Activated naive CD4-positive, alpha-beta T cell treated with anti-CD3 and anti-CD28 coated beads for 36 hours (primary cell): ENCODE measurements at regions of chr15 and their contacts with region 1.

Region 1: GRCh38 chr15:70240082-70240481 is 142.4 kb upstream of the TLE3 start:
- DNase-seq: peak; percentile 84
- H3K4me3 Mint-ChIP-seq: no peak overlapping the region
- H3K27ac Mint-ChIP-seq: no peak overlapping the region
- H3K4me1 Mint-ChIP-seq: peaks cover 56% of the 10 kb centered on the region
- H3K27me3 Mint-ChIP-seq: peaks cover 2% of the 10 kb centered on the region

Region 2: DNA sequence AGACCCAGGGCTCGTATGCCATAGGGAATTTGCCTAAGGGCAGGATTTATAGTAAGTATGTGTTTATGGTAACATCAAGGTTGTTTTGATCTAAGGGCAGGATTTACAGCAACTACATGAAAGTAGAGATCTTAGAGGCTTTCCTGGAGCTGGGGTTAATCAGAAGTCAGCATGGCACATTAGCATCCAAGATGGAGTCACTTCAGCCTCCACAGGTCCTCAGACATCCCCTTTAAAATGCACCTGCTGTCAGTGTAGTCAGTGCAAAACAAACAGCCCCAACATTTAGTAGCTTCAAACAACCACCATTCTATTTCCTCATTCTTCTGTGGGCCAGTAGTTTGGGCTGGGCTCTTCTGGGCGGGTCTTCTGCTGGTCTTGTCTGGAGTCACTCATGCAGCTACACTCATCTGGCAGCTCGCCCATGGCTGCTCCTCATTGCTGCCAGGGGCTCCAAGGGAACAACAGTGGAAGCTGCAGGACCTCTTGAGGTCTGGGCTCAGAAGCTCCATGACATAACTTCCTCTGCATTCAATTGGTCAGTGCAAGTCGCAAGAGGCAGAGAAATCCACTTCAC is 242.3 kb before region 1 on chr15:
- CTCF ChIA-PET with region 1: no interaction called
- intact Hi-C with region 1: no loop called
- DNase-seq: no peak
- H3K4me3 Mint-ChIP-seq: no peak overlapping the region
- H3K27ac Mint-ChIP-seq: no peak overlapping the region
- H3K4me1 Mint-ChIP-seq: no peaks in the 10 kb centered on the region
- H3K27me3 Mint-ChIP-seq: no peaks in the 10 kb centered on the region

Region 3: DNA sequence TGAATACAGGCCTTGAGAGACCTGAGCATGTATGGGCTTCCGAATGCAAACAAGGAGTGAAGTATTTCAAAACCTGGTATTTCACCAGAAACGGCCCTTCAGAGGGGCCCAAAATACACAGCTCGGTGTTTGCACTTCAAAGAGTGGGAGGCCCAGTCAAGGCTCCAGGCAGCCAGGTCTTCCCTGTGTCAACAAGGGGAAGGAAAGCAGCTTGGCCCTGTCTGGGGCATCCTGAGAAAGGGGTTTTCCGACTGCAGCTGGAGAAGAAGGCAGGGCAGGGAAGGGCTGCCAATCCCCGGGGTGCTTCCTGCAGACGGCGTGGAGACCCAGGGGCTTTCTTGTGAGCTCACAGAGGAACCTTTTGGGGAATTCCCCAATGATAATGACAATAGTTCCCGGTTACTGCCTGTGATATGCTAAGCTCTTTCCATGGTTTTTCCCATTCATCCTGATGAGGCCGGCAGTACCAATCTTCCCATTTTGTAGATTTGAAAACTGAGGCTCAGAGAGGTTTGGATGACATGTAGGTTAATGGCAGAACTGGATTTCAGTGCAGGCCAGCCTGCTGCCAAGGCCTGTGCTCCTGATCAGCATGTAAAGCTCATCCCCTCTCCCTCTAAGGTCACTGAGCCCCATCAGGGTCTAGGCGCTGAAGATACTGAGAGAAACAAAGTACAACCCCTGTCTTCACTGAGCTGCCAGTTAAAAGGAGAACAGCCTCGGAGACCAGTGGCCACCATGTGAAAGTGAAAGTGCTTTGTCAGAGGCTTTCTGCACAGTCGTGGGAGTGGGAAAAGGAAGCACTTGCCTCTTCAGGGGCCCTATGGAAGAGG is 99.3 kb before region 1 on chr15:
- CTCF ChIA-PET with region 1: no interaction called
- intact Hi-C with region 1: loop called (anchors 2 kb)
- DNase-seq: peak; percentile 78
- H3K4me3 Mint-ChIP-seq: no peak overlapping the region
- H3K27ac Mint-ChIP-seq: peak overlapping the region; percentile 32
- H3K4me1 Mint-ChIP-seq: peaks cover 34% of the 10 kb centered on the region
- H3K27me3 Mint-ChIP-seq: peaks cover 3% of the 10 kb centered on the region

Region 4: DNA sequence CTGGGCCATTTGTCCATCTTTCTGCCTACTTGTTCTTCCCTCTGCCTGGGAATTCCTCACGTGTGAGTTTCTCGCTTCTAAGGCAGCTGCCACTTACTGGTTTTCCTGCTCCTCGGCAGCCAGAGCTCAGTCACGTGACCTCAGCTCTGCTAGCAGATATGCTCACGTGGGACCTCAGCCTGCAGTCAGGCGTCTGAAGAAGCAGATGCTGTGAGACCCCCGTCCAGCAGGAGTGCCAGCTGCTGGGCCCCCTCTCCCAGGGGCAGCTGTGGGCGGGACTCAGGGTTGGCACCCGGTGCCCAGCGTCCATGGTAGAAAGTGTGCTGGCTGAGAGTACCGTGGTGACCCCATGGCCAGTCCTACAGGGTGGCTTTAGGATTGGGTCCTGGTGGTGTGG is 18.9 kb after region 1 on chr15:
- CTCF ChIA-PET with region 1: interaction called, 4 read pairs
- intact Hi-C with region 1: loop called (anchors 1 kb)
- DNase-seq: peak; percentile 38
- H3K4me3 Mint-ChIP-seq: peak overlapping the region; percentile 13
- H3K27ac Mint-ChIP-seq: no peak overlapping the region
- H3K4me1 Mint-ChIP-seq: peaks cover 39% of the 10 kb centered on the region
- H3K27me3 Mint-ChIP-seq: no peaks in the 10 kb centered on the region

Region 5: GRCh38 chr15:70299931-70300869 is 60.1 kb after region 1 on chr15:
- CTCF ChIA-PET with region 1: no interaction called
- intact Hi-C with region 1: loop called (anchors 1 kb)
- DNase-seq: peak; percentile 89
- H3K4me3 Mint-ChIP-seq: no peak overlapping the region
- H3K27ac Mint-ChIP-seq: no peak overlapping the region
- H3K4me1 Mint-ChIP-seq: peaks cover 11% of the 10 kb centered on the region
- H3K27me3 Mint-ChIP-seq: no peaks in the 10 kb centered on the region